ENCODE measurements at regions of chr1 and their contacts with region 1.

Region 1: GRCh38 chr1:221923929-221924598 is 182.2 kb upstream of the DUSP10 start:
- DNase-seq: no peak
- ATAC-seq: no peak
- H3K4me3 ChIP-seq: no peak overlapping the region
- H3K27ac ChIP-seq: no peak overlapping the region
- H3K4me1 ChIP-seq: peaks cover 12% of the 10 kb centered on the region
- H3K27me3 ChIP-seq: no peaks in the 10 kb centered on the region
- CTCF ChIP-seq: no peak

Region 2: GRCh38 chr1:221725735-221726672 is 198.1 kb before region 1 on chr1:
- CTCF ChIA-PET with region 1: no interaction called
- POLR2A ChIA-PET with region 1: interaction called, 10 read pairs
- intact Hi-C with region 1: no loop called
- DNase-seq: peak; percentile 82
- ATAC-seq: peak; percentile 94
- H3K4me3 ChIP-seq: no peak overlapping the region
- H3K27ac ChIP-seq: peak overlapping the region; percentile 14
- H3K4me1 ChIP-seq: peaks cover 19% of the 10 kb centered on the region
- H3K27me3 ChIP-seq: no peaks in the 10 kb centered on the region
- CTCF ChIP-seq: no peak

Region 3: GRCh38 chr1:221829327-221830015 is 94.6 kb before region 1 on chr1:
- CTCF ChIA-PET with region 1: no interaction called
- POLR2A ChIA-PET with region 1: interaction called, 13 read pairs
- intact Hi-C with region 1: no loop called
- DNase-seq: peak; percentile 82
- ATAC-seq: peak; percentile 92
- H3K4me3 ChIP-seq: peak overlapping the region; percentile 3; the same call in 1 of the 2 replicates
- H3K27ac ChIP-seq: peak overlapping the region; percentile 57
- H3K4me1 ChIP-seq: peaks cover 36% of the 10 kb centered on the region
- H3K27me3 ChIP-seq: no peaks in the 10 kb centered on the region
- CTCF ChIP-seq: no peak

Region 4: DNA sequence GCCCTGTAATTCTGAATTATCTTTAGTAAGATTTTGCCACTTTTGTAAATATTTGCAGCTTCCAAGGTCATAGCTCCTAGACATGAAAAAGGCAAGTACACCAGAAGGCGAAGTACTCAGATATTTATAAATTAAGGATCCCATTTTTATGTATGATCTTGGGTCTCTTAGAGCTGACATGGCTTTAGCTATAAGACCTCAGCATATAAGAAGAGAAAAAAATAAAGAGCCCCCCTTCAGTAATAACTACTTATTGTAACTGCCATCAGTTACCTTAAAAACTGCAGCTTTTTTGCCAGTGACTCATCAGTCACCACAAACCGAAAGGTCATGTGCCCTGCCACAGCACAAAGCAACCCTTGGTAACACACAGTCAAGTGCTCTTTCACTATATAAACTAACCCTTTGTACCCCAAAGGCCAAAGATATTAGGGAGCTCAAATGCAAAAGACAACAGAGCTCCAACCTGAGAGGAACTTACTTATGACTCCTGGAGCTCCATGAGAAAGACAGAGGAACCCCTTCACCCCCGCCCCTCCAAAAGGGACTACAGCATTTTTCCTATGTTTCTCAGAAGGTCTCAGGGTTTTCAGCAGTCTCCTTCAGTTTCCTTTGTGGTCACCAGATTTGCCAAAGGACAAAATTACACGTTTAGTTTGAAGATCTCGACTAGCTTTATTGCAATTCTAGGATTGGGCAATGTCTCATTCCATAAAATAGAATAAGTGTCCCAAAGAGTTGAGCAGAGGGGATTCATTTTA is 37.6 kb after region 1 on chr1:
- CTCF ChIA-PET with region 1: no interaction called
- POLR2A ChIA-PET with region 1: no interaction called
- intact Hi-C with region 1: loop called (anchors 2 kb)
- DNase-seq: peak; percentile 93
- ATAC-seq: peak; percentile 50
- H3K4me3 ChIP-seq: peak overlapping the region; percentile 27; the same call in 1 of the 2 replicates
- H3K27ac ChIP-seq: peak overlapping the region; percentile 74
- H3K4me1 ChIP-seq: peaks cover 65% of the 10 kb centered on the region
- H3K27me3 ChIP-seq: no peaks in the 10 kb centered on the region
- CTCF ChIP-seq: no peak

Region 5: DNA sequence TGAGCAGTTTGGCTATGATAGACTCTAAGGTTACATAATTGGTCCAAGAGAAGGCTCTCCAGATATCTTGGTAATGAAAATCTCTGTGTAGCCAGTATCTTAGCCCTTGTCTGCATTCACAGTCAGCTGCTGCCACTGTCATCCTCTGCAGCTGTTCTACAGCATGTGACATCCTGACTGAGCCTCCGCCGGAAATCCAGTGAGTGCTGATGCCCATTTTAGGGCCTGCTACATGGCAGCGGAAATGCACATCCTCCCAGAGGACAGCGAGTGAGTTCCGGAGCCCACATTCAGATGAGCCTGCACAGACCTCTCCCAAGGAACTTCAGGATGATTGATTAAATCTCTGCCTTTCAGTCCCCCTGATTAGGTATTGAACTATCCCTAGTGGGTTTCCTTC is 386.8 kb after region 1 on chr1:
- CTCF ChIA-PET with region 1: no interaction called
- POLR2A ChIA-PET with region 1: no interaction called
- intact Hi-C with region 1: no loop called
- DNase-seq: no peak
- ATAC-seq: no peak
- H3K4me3 ChIP-seq: no peak overlapping the region
- H3K27ac ChIP-seq: no peak overlapping the region
- H3K4me1 ChIP-seq: no peaks in the 10 kb centered on the region
- H3K27me3 ChIP-seq: 0 out of 2 replicates have a peak, but pooled peaks cover 11% of the 10 kb centered on the region
- CTCF ChIP-seq: no peak